ENCODE measurements at regions of chr22 and their contacts with region 1.

Region 1: DNA sequence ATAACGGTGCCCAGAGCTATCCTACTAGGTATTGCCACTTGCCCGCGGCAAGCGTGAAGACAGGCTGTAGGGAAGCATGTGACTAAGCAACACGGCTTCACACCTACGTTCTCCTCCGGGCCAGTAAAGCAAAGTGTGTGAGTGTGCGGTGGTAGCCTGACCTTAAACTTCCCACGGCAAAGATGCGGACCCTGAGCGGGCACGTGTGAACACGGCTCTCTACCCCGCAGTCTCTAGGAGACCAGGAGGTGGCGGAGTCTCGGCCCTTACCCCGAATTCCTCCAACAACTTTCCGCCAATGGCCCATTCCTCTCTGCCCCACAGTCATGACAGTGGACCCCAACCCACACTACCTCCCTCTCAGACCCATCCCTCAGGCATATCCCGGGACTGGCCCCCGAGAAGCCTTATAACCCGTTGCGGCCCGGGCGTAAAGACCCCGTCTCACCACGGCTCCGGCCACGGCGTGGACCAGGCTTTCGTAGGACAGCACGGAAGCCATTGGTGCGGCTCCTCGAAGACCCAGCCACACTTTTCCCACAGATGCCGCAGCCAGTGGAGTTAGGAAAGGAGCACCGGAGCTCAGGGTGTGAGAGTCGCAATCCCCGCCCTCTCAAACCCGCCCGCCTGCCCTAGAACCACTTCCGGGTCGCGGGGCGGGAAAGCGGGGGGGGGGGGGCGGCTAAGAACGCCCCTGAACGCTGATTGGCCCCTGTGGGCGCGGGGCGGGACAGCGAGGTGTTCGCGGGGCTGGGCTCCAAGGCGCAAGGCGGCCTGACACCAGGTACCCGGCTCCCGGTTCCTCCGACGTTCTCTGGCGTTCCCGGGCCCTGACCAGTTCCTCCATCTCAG is at the start of gene SLC25A17:
- H3K4me3 ChIP-seq: peak within 1 kb of the TSS; percentile 87
- H3K27ac ChIP-seq: peak within 1 kb of the TSS; percentile 91
- H3K4me1 ChIP-seq: no peaks in the 10 kb centered on the region
- CTCF ChIP-seq: peak; percentile 85

Region 2: DNA sequence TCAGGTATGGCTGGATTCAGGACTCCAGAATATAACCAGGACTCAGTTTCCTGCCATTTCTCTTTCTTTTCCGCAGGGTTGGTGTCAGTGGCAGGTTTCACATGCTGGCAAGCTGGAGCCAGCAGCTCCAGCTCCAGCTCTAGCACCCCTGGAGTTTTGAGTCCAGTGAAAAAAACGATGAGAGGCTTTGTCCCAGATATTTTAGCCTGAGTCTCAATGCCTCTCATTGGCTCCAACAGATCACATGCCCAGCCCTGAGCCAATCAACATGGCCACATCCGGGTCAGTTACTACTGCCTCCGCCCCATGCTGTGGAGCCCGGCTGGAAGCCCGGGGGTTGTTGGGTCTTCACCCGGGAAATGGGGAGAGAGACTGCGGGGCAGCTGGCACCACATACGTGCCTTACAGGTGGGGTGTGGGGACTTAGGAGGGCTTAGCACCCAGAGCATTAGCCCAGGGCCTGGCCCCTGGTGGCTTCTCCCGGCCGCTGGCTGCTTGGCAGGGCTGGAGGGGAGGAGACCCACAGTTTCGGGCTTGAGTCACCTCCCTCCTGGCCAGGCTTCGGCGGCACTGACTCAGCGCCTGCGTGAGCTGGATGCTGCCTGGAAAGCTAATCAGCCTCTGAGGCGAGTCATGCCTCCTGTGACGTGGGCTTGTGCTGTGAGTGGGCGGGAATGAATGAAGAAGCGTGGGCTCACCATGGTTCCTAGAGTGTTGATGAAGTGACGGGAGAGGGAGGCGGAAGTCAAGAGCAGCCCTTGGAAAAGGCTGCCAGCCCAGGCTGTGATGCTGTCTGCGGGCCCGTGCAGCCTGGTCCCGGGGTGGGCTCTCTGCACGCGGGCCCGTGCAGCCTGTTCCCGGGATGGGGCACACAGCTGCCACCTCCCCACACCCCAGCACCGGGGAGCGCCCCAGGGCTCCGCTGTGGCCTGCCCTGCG is 167.1 kb before region 1 on chr22:
- CTCF ChIA-PET with region 1: no interaction called
- POLR2A ChIA-PET with region 1: interaction called, 12 read pairs
- H3K4me3 ChIP-seq: peak overlapping the region; percentile 71
- H3K27ac ChIP-seq: peak overlapping the region; percentile 88
- H3K4me1 ChIP-seq: peaks cover 3% of the 10 kb centered on the region; the same call in 1 of the 2 replicates
- CTCF ChIP-seq: no peak

Region 3: GRCh38 chr22:40856513-40857308 is 37.7 kb after region 1 on chr22 and contains the starts of genes ST13 and XPNPEP3:
- CTCF ChIA-PET with region 1: interaction called, 3 read pairs
- POLR2A ChIA-PET with region 1: interaction called, 11 read pairs
- H3K4me3 ChIP-seq: peak within 1 kb of the TSS; percentile 53
- H3K27ac ChIP-seq: peak within 1 kb of the TSS; percentile 98
- H3K4me1 ChIP-seq: peaks cover 19% of the 10 kb centered on the region
- CTCF ChIP-seq: peak; percentile 46; the same call in 1 of the 2 replicates

Region 4: GRCh38 chr22:40874016-40874415 is 55.0 kb after region 1 on chr22:
- CTCF ChIA-PET with region 1: no interaction called
- POLR2A ChIA-PET with region 1: no interaction called
- H3K4me3 ChIP-seq: no peak overlapping the region
- H3K27ac ChIP-seq: no peak overlapping the region
- H3K4me1 ChIP-seq: no peaks in the 10 kb centered on the region
- CTCF ChIP-seq: no peak

Measured in HEK293 (cell line).